Endothelial cell of umbilical vein (primary cell): ENCODE measurements at regions of chr1 and their contacts with region 1.

Region 1: GRCh38 chr1:64242895-64243756 is 39.7 kb downstream of the UBE2U start:
- DNase-seq: peak; percentile 46
- H3K4me3 ChIP-seq: no peak overlapping the region
- H3K27ac ChIP-seq: no peak overlapping the region
- H3K4me1 ChIP-seq: peaks cover 11% of the 10 kb centered on the region
- H3K27me3 ChIP-seq: peaks cover 7 to 11% of the 10 kb centered on the region in 2 experiments
- CTCF ChIP-seq: peak; percentile 5 to 11
- POLR2A ChIP-seq: no peak

Region 2: DNA sequence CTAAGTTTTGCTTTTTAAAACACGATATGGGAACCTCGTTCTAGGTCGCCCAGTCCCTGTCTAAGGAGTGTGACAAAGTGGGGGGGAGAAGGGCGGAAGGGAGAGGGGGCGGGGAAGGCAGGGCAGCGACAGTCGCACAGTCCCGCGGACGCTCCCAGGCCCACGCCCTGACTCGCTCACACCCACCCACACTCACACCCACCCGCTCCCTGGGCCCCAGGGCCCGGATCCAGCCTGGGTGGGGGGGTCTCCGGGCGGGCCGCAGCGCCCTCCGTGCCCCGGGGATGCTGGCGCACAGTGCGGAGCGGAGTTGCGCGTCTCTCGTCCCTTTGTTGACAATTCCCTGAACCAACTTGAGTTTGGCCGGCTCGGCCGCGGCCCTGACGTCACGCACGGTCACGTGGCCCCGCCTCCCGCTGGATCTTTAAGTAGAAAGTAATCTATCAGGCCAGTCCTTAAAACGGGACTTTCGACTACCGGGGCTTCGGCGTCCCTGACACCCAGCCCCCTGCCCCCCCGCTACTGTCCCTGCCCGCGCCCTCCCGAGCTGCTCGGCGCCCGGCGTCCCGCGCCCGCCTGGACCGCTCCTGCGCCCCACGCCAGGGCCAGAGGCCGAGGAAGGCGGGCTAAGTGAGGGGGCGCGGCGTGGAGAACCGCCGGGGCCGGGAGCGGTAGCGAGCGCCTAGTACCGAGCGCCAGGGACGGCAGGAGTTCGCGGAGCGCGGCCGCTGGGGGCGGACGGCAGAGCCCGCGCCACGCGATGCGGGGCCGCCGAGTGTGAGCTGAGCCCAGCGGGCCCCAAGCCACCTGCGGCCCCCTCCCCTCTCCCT is 920.8 kb before region 1 on chr1 and contains the start of gene FOXD3:
- CTCF ChIA-PET with region 1: no interaction called
- POLR2A ChIA-PET with region 1: no interaction called
- dilution Hi-C with region 1: no loop called
- intact Hi-C with region 1: loop called (anchors 5 kb)
- DNase-seq: peak; percentile 46
- H3K4me3 ChIP-seq: peak within 1 kb of the TSS; percentile 29 to 34 (median 30)
- H3K27ac ChIP-seq: no peak within 1 kb of the TSS
- H3K4me1 ChIP-seq: peaks cover 2% of the 10 kb centered on the region
- H3K27me3 ChIP-seq: peaks cover 78 to 100% of the 10 kb centered on the region in 2 experiments
- CTCF ChIP-seq: no peak
- POLR2A ChIP-seq: no peak
- total RNA-seq, gene FOXD3: not detected in 2 replicates

Region 3: DNA sequence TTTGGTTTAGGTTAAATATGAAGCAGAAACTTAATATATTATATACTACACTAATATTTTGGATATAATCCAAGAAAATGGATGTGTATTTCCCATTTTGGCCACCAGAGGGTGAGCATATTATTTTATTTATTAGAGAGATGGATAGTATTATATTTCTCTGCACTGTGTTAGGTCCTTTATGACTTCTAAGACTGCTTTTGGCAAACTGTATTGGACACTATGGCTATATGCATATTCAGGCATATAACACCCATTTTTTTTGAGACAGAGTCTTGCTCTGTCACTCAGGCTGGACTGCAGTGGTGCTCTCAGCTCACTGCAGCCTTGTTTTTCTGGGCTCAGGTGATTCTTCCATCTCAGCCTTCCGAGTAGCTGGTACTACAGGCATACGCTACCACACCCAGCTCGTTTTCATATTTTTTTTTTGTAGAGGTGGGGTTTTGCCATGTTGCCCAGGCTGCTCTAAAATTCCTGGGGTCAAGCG is 667.7 kb before region 1 on chr1:
- CTCF ChIA-PET with region 1: interaction called, 50 read pairs
- POLR2A ChIA-PET with region 1: no interaction called
- dilution Hi-C with region 1: no loop called
- intact Hi-C with region 1: loop called (anchors 1 kb)
- DNase-seq: peak; percentile 60
- H3K4me3 ChIP-seq: no peak overlapping the region
- H3K27ac ChIP-seq: no peak overlapping the region
- H3K4me1 ChIP-seq: no peaks in the 10 kb centered on the region
- H3K27me3 ChIP-seq: no peaks in the 10 kb centered on the region
- CTCF ChIP-seq: peak; percentile 18 to 20
- POLR2A ChIP-seq: no peak

Region 4: GRCh38 chr1:63674238-63674864 is 568.8 kb before region 1 on chr1:
- CTCF ChIA-PET with region 1: interaction called, 224 read pairs
- POLR2A ChIA-PET with region 1: no interaction called
- dilution Hi-C with region 1: loop called (anchors 25 kb)
- intact Hi-C with region 1: loop called (anchors 1 kb)
- DNase-seq: peak; percentile 74
- H3K4me3 ChIP-seq: no peak overlapping the region
- H3K27ac ChIP-seq: no peak overlapping the region
- H3K4me1 ChIP-seq: no peaks in the 10 kb centered on the region
- H3K27me3 ChIP-seq: peaks cover 0 to 2% of the 10 kb centered on the region in 2 experiments
- CTCF ChIP-seq: peak; percentile 74 to 83
- POLR2A ChIP-seq: no peak

Region 5: DNA sequence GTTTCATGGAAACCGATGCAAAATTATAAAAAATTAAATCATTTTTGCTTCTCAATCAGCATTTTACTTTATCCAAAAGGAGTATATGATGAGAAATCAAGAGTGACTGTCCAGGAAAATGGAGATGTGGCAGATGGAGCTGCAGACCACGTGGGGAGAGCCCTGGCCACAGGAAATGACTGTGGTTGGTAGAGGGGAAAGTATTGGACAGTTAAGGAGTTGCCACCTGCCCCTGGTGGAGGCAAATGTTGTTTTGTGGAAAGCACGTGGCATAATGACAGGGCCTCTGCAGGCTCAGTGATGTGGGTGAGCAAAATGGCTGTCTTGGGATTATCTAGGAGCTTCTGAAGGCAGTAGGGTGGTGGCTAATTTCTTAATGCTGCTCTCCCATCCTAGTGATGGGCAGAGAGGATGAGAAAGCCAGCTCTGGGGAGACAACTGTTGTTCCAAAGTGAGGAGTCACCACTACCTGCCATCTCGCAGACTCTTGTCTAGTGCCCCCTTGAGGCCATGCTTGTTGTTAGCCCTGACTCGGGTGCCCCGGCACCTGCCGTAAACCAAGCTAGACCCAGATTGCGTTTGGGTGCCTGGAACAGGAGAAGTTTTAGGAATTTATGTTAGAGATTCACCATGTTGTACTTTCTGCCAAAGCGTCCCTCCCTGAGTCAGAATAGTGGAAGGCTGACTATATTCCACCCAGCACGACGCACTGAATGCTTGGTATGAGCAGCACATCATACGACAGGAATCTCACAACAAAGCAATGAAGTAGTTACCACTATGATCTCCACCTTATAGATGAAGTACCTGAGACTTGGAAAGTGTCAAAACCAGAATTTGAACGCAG is 325.3 kb before region 1 on chr1:
- CTCF ChIA-PET with region 1: interaction called, 10 read pairs
- POLR2A ChIA-PET with region 1: no interaction called
- dilution Hi-C with region 1: no loop called
- intact Hi-C with region 1: loop called (anchors 1 kb)
- DNase-seq: no peak
- H3K4me3 ChIP-seq: no peak overlapping the region
- H3K27ac ChIP-seq: no peak overlapping the region
- H3K4me1 ChIP-seq: peaks cover 17% of the 10 kb centered on the region
- H3K27me3 ChIP-seq: peaks cover 0 to 3% of the 10 kb centered on the region in 2 experiments
- CTCF ChIP-seq: peak; percentile 8 to 10
- POLR2A ChIP-seq: no peak

Region 6: GRCh38 chr1:64171797-64172281 is 71.3 kb before region 1 on chr1:
- CTCF ChIA-PET with region 1: interaction called, 3 read pairs
- POLR2A ChIA-PET with region 1: no interaction called
- dilution Hi-C with region 1: no loop called
- intact Hi-C with region 1: loop called (anchors 5 kb)
- DNase-seq: peak; percentile 38
- H3K4me3 ChIP-seq: no peak overlapping the region
- H3K27ac ChIP-seq: no peak overlapping the region
- H3K4me1 ChIP-seq: peaks cover 14% of the 10 kb centered on the region
- H3K27me3 ChIP-seq: no peaks in the 10 kb centered on the region
- CTCF ChIP-seq: no peak
- POLR2A ChIP-seq: no peak